ENCODE measurements at regions of chr7 and their contacts with region 1.

Region 1: GRCh38 chr7:18495412-18496340 is at the start of gene HDAC9:
- DNase-seq: peak; percentile 92
- H3K4me3 ChIP-seq: peak within 1 kb of the TSS; percentile 85
- H3K27ac ChIP-seq: peak within 1 kb of the TSS; percentile 79
- H3K4me1 ChIP-seq: peaks cover 29% of the 10 kb centered on the region
- CTCF ChIP-seq: no peak
- total RNA-seq, gene HDAC9: 90.3 and 91.7 TPM in 2 replicates

Region 2: GRCh38 chr7:17940302-17940883 is 555.3 kb before region 1 on chr7 and contains the start of gene SNX13:
- CTCF ChIA-PET with region 1: no interaction called
- POLR2A ChIA-PET with region 1: no interaction called
- intact Hi-C with region 1: loop called (anchors 10 kb)
- DNase-seq: peak; percentile 94
- H3K4me3 ChIP-seq: peak within 1 kb of the TSS; percentile 96
- H3K27ac ChIP-seq: peak within 1 kb of the TSS; percentile 71
- H3K4me1 ChIP-seq: peaks cover 24% of the 10 kb centered on the region
- CTCF ChIP-seq: peak; percentile 48
- total RNA-seq, gene SNX13: 20.0 and 25.1 TPM in 2 replicates

Region 3: GRCh38 chr7:18408461-18408860 is 87.2 kb before region 1 on chr7:
- CTCF ChIA-PET with region 1: no interaction called
- POLR2A ChIA-PET with region 1: no interaction called
- intact Hi-C with region 1: no loop called
- DNase-seq: no peak
- H3K4me3 ChIP-seq: no peak overlapping the region
- H3K27ac ChIP-seq: no peak overlapping the region
- H3K4me1 ChIP-seq: no peaks in the 10 kb centered on the region
- CTCF ChIP-seq: no peak

Region 4: DNA sequence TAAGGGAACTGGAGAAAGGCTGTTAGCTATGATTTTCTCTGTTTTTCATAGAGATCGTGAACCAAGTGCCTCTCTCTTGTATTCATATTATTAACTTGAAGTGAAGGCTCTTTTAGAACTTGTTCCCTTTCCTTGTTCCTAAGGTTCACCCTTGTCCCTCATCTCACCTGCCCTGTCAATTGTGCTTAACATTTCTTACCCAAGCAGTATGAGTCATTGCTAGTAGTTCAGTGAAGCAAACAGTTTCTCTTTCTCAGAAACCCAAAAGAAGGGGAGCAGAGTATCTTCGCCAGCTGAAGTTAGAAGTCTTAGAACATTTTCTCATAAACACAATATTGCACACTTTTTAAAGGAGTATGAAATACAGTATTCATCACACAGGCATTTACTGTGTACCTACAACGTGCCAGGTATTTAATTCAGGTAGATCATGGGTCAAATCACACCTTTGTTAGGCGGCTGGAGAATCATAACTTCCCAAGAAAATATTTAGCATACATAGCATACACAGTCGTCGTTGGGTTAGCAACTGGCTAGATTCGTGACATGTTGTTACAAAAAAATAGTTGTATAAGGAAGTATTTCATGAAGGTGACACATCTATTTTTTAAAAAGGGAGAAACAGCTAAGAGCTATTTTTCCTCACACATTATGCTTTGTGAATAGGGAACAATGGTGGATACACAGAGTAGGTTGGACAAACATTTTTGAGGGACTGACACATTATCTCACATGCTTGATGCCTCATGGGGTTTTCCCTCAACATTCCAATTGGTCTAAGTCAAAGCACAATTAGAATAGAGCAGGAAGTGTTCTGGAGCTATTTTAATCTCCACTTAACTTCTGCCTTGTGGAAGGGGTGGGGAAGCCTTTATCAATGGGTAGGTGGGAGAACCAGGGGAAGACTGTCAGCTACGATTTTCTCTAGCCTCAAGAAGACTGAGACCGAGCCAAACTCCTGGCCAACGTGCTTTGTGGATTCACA is 13.1 kb after region 1 on chr7:
- CTCF ChIA-PET with region 1: interaction called, 6 read pairs
- POLR2A ChIA-PET with region 1: interaction called, 532 read pairs
- intact Hi-C with region 1: no loop called
- DNase-seq: no peak
- H3K4me3 ChIP-seq: peak overlapping the region; percentile 45
- H3K27ac ChIP-seq: peak overlapping the region; percentile 32
- H3K4me1 ChIP-seq: peaks cover 89% of the 10 kb centered on the region
- CTCF ChIP-seq: no peak

Region 5: GRCh38 chr7:18530224-18531179 is 34.8 kb after region 1 on chr7:
- CTCF ChIA-PET with region 1: no interaction called
- POLR2A ChIA-PET with region 1: interaction called, 532 read pairs
- intact Hi-C with region 1: loop called (anchors 5 kb)
- DNase-seq: peak; percentile 63
- H3K4me3 ChIP-seq: peak overlapping the region; percentile 47
- H3K27ac ChIP-seq: peak overlapping the region; percentile 88
- H3K4me1 ChIP-seq: peaks cover 98% of the 10 kb centered on the region
- CTCF ChIP-seq: no peak

Region 6: DNA sequence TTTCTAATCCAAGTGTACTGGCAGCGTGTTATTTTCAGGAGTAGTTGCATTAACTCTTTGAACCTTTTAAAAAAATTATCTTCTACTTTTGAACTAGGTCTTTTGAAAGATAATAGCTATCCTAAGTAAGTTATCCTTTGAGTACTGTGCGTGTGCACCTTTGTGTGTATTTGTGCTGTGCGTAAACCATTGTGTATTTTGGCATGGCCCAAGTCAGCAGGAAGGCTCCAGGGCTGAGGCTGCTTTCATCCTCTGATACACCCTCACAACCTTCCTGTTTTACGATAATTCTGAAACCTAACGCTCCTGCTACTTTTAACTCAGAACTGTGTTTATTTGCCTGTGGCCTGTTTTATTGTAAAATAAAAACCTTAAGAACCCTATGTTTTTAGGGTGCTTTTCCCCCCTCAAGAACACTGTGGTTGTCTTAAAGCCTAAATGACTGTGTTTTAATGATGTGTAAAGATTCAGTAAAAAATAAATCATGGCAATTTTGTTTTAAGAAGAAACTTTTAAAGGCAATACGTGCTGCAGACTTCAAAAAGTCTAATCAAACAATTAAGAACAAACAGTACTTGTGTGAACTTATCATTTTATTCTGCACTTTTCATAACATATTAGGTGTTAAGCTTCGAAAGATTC is 57.4 kb after region 1 on chr7:
- CTCF ChIA-PET with region 1: no interaction called
- POLR2A ChIA-PET with region 1: interaction called, 12 read pairs
- intact Hi-C with region 1: no loop called
- DNase-seq: peak; percentile 54
- H3K4me3 ChIP-seq: peak overlapping the region; percentile 41
- H3K27ac ChIP-seq: peak overlapping the region; percentile 36
- H3K4me1 ChIP-seq: peaks cover 43% of the 10 kb centered on the region
- CTCF ChIP-seq: no peak

Region 7: DNA sequence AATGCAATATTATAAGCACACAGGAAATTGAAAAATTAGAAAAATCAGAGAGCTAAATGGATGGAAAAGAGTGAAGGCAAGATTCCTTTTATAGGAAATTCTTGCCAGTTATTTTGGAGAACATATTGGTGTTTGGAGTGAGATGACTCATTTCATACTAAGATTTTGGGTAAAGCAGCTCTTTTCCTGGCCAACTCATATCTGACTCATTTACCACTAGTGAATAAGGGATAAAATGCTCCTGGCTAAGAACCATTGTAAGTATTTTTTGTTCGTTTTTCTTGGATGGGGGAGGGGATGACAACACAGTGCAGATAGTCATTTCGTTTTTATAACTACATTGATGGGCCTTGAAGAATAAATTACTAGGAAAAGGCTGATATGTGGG is 482.4 kb after region 1 on chr7:
- CTCF ChIA-PET with region 1: no interaction called
- POLR2A ChIA-PET with region 1: no interaction called
- intact Hi-C with region 1: no loop called
- DNase-seq: no peak
- H3K4me3 ChIP-seq: no peak overlapping the region
- H3K27ac ChIP-seq: no peak overlapping the region
- H3K4me1 ChIP-seq: no peaks in the 10 kb centered on the region
- CTCF ChIP-seq: no peak